Mammary epithelial cell (primary cell): ENCODE measurements at regions of chr11 and their contacts with region 1.

Region 1: GRCh38 chr11:130499828-130500227 is 51.4 kb downstream of the ADAMTS15 start:
- DNase-seq: peak; percentile 13
- H3K4me3 ChIP-seq: no peak overlapping the region
- H3K27ac ChIP-seq: no peak overlapping the region
- H3K4me1 ChIP-seq: peaks cover 6% of the 10 kb centered on the region
- H3K27me3 ChIP-seq: no peaks in the 10 kb centered on the region
- CTCF ChIP-seq: no peak

Region 2: GRCh38 chr11:130413405-130414106 is 86.3 kb before region 1 on chr11:
- CTCF ChIA-PET with region 1: no interaction called
- dilution Hi-C with region 1: no loop called
- in situ Hi-C with region 1: no loop called
- intact Hi-C with region 1: no loop called
- DNase-seq: peak; percentile 94
- H3K4me3 ChIP-seq: no peak overlapping the region
- H3K27ac ChIP-seq: peak overlapping the region; percentile 57
- H3K4me1 ChIP-seq: peaks cover 20% of the 10 kb centered on the region
- H3K27me3 ChIP-seq: no peaks in the 10 kb centered on the region
- CTCF ChIP-seq: no peak

Region 3: DNA sequence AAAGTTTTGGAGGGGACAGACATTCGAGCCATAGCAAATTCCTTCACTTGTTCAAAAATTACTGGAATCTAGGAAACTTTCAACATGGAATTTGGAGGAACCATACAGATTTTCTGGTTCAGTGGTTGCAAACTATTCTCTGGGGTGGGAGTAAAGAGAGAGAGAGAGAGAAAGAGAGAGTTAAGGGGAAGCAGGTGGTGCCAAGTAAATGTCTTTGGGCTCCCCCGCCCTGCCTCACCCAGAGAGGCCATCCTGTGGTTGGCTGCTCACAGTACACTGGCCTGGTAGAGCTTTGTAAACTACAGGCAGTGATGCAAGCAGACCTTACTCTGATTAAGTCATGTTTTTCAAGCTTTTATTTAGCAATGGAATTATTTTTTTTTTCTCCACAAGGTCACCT is 31.2 kb after region 1 on chr11:
- CTCF ChIA-PET with region 1: no interaction called
- dilution Hi-C with region 1: loop called (anchors 5 kb)
- in situ Hi-C with region 1: no loop called
- intact Hi-C with region 1: no loop called
- DNase-seq: no peak
- H3K4me3 ChIP-seq: no peak overlapping the region
- H3K27ac ChIP-seq: no peak overlapping the region
- H3K4me1 ChIP-seq: peaks cover 11% of the 10 kb centered on the region
- H3K27me3 ChIP-seq: no peaks in the 10 kb centered on the region
- CTCF ChIP-seq: no peak